ENCODE measurements at regions of chr4 and their contacts with region 1.

Region 1: GRCh38 chr4:106868381-106869035 is 167.6 kb downstream of the DKK2 start:
- DNase-seq: no peak
- H3K4me3 ChIP-seq: no peak overlapping the region
- H3K27ac ChIP-seq: no peak overlapping the region
- H3K4me1 ChIP-seq: no peaks in the 10 kb centered on the region
- H3K27me3 ChIP-seq: no peaks in the 10 kb centered on the region
- CTCF ChIP-seq: no peak
- POLR2A ChIP-seq: no peak

Region 2: GRCh38 chr4:107292979-107293378 is 424.5 kb after region 1 on chr4:
- intact Hi-C with region 1: loop called (anchors 5 kb)
- DNase-seq: no peak
- H3K4me3 ChIP-seq: no peak overlapping the region
- H3K27ac ChIP-seq: no peak overlapping the region
- H3K4me1 ChIP-seq: no peaks in the 10 kb centered on the region
- H3K27me3 ChIP-seq: no peaks in the 10 kb centered on the region
- CTCF ChIP-seq: no peak
- POLR2A ChIP-seq: no peak